Activated CD4-positive, alpha-beta T cell treated with anti-CD3 and anti-CD28 coated beads for 36 hours (primary cell): ENCODE measurements at regions of chr17 and their contacts with region 1.

Region 1: GRCh38 chr17:39365242-39365641 is 36.2 kb downstream of the FBXL20 start:
- DNase-seq: no peak
- ATAC-seq: no peak
- H3K4me3 Mint-ChIP-seq: no peak overlapping the region
- H3K27ac Mint-ChIP-seq: no peak overlapping the region
- H3K4me1 Mint-ChIP-seq: peaks cover 12% of the 10 kb centered on the region
- H3K27me3 Mint-ChIP-seq: no peaks in the 10 kb centered on the region

Region 2: GRCh38 chr17:39306509-39307212 is 58.6 kb before region 1 on chr17:
- CTCF ChIA-PET with region 1: no interaction called
- POLR2A ChIA-PET with region 1: no interaction called
- intact Hi-C with region 1: loop called in 1 of 2 experiments (anchors 2 kb)
- DNase-seq: no peak
- ATAC-seq: no peak
- H3K4me3 Mint-ChIP-seq: no peak overlapping the region
- H3K27ac Mint-ChIP-seq: no peak overlapping the region
- H3K4me1 Mint-ChIP-seq: peaks cover 3% of the 10 kb centered on the region
- H3K27me3 Mint-ChIP-seq: no peaks in the 10 kb centered on the region